Common myeloid progenitor, CD34-positive (primary cell): ENCODE measurements at regions of chr18 and their contacts with region 1.

Region 1: GRCh38 chr18:23650968-23651927 is 11.5 kb downstream of the ANKRD29 start:
- DNase-seq: no peak
- H3K4me3 ChIP-seq: no peak overlapping the region
- H3K27ac ChIP-seq: no peak overlapping the region
- H3K4me1 ChIP-seq: peaks cover 0 to 9% (median 1%) of the 10 kb centered on the region in 4 experiments
- H3K27me3 ChIP-seq: peaks cover 0 to 1% (median 0%) of the 10 kb centered on the region in 5 experiments

Region 2: DNA sequence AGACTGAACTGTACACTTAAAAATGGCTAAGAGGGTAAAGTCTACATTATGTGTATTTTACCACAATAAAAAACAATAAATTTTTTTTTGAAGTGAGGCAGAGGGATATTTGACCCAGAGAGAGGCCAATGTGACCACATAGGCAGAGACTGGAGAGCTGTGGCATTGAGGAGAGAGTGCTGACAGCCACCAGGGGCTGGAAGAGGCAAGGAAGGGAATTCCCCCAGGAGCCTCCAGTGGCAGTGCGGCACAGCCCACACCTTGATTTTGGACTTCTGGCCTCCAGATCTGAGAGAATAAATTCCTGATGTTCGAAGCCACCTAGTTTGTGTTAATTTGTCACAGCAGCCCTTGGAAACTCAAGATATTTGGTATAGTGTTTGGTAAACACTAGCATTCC is 11.2 kb before region 1 on chr18:
- CTCF ChIA-PET with region 1: interaction called, 21 read pairs
- POLR2A ChIA-PET with region 1: no interaction called
- DNase-seq: no peak
- H3K4me3 ChIP-seq: no peak overlapping the region
- H3K27ac ChIP-seq: no peak overlapping the region
- H3K4me1 ChIP-seq: peaks cover 0 to 11% (median 2%) of the 10 kb centered on the region in 4 experiments
- H3K27me3 ChIP-seq: no peaks in the 10 kb centered on the region